Activated T-helper 2 cell treated with anti-CD3 and anti-CD28 coated beads, Interferon-gamma antibody, Interleukin-2, Interleukin-4, amounts not matched to agents 10 μg/mL and 5 μg/mL and 100 μg/mL, durations not matched to agents 14 hours and 24 hours and 36 hours (primary cell): ENCODE measurements at regions of chr7 and their contacts with region 1.

Region 1: DNA sequence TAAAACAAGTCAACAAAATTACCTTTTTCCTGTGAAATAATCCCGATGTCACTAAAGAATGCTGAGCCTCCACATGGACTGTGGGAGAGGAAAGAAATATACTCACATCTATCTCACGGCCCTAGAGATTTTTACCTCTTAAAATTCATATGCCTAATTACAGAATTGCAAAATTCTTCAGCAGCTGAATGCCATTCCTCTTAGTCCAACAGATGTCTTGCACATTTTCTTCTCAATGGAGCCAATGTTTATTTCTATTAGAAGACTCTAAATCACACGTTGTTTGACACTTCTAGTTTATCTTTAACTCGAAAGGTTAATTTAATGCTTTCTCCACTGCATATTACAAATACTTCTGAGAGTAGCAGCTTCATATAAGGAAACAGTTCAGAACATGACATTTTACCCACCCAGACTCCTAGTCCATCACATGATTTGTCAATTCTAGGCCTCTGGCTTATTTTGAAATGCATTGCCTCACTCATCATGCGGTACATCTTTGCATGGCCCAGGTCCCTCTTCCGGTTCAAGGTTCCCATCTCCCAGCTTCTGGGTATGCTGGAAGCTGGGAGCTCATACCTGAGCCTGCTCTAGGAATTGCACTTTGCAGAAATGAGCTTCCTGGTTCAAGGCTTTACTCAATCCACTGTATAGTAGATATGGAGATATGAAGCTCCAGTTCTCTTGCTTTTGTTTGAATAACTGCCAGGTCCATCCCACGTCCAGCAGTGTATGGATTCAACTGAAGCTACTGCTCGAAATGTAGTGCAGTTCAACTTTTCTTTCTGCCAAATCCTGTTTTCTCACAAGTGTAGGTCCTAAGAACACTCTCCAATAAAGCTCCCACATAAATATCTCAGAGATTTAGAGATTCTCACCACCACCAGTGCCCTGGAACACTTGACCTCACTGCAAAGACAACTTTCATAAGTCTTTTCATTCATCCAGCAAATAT is 306.2 kb downstream of the GPR37 start:
- DNase-seq: no peak
- H3K4me3 Mint-ChIP-seq: no peak overlapping the region
- H3K27ac Mint-ChIP-seq: no peak overlapping the region
- H3K4me1 Mint-ChIP-seq: no peaks in the 10 kb centered on the region
- H3K27me3 Mint-ChIP-seq: no peaks in the 10 kb centered on the region

Region 2: GRCh38 chr7:124399941-124400340 is 59.4 kb before region 1 on chr7:
- intact Hi-C with region 1: loop called (anchors 10 kb)
- DNase-seq: no peak
- H3K4me3 Mint-ChIP-seq: no peak overlapping the region
- H3K27ac Mint-ChIP-seq: no peak overlapping the region
- H3K4me1 Mint-ChIP-seq: no peaks in the 10 kb centered on the region
- H3K27me3 Mint-ChIP-seq: no peaks in the 10 kb centered on the region